CD8-positive, alpha-beta memory T cell (primary cell): ENCODE measurements at regions of chr17 and their contacts with region 1.

Region 1: GRCh38 chr17:67475236-67475937 is 98.3 kb downstream of the PITPNC1 start:
- DNase-seq: peak; percentile 73 to 89 (median 81)
- H3K4me3 ChIP-seq: peak overlapping the region; percentile 53
- H3K4me3 Mint-ChIP-seq: peak overlapping the region; percentile 42 to 87 (median 78)
- H3K27ac ChIP-seq: peak overlapping the region; percentile 48
- H3K27ac Mint-ChIP-seq: peak overlapping the region; percentile 91 to 99 (median 94)
- H3K4me1 ChIP-seq: peaks cover 71% of the 10 kb centered on the region
- H3K4me1 Mint-ChIP-seq: peaks cover 69 to 82% (median 73%) of the 10 kb centered on the region in 3 donors
- H3K27me3 ChIP-seq: no peaks in the 10 kb centered on the region
- H3K27me3 Mint-ChIP-seq: no peaks in the 10 kb centered on the region

Region 2: DNA sequence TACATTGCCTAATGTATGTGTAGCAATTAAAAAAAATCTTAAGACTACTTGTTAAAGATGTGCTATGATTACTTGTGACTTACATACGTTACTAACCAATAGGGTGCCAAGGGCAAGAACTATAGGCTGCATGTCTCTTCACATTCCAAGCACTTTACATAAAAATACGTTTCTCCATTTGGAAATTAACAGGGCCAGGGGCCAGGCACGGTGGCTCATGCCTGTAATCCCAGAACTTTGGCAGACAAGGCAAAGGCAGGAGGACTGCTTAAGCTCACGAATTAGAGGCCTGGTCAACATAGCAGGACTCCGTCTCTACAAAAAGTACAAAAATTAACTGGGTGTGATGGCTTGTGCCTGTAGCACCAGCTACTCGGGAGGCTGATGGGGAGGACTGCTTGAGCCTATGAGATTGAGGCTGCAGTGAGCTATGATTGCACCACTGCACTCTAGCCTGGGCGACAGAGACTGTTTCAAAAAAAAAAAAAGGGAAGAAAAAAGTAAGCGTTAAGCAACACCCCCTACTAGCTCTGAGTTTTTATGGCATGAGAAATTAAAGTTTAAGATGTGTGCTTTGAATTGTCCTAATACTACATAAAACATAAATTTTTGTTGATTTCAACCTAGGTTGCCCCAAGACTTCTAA is 121.3 kb before region 1 on chr17:
- CTCF ChIA-PET with region 1: no interaction called
- POLR2A ChIA-PET with region 1: no interaction called
- DNase-seq: no peak
- H3K4me3 ChIP-seq: no peak overlapping the region
- H3K4me3 Mint-ChIP-seq: no peak overlapping the region
- H3K27ac ChIP-seq: no peak overlapping the region
- H3K27ac Mint-ChIP-seq: peak overlapping the region in 3 of 8 donors; percentile 56 to 68 (median 66)
- H3K4me1 ChIP-seq: peaks cover 6% of the 10 kb centered on the region
- H3K4me1 Mint-ChIP-seq: peaks cover 22 to 42% (median 26%) of the 10 kb centered on the region in 3 donors
- H3K27me3 ChIP-seq: no peaks in the 10 kb centered on the region
- H3K27me3 Mint-ChIP-seq: no peaks in the 10 kb centered on the region

Region 3: DNA sequence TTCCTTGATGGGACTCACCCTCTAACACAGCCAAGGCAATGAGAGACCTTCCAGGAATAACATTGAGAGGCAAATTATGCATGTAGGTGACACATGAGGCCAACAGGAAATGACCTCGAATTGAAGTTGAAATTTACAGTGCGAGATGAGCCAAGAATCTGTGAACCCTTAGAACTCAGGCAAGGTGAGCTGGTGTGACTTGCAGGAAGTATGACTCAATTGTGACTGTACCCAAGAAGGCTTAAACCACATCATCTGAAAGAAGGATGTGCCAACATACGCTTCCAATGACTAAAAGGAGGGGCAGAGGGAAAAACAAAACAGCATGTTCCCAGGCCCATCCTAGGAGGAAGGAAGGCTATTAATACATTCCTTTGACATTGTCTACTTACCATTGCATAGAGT is 53.5 kb before region 1 on chr17:
- CTCF ChIA-PET with region 1: interaction called, 20 read pairs
- POLR2A ChIA-PET with region 1: interaction called, 4 read pairs
- DNase-seq: peak; percentile 16 to 82 (median 79)
- H3K4me3 ChIP-seq: no peak overlapping the region
- H3K4me3 Mint-ChIP-seq: peak overlapping the region; percentile 1 to 82 (median 67)
- H3K27ac ChIP-seq: peak overlapping the region; percentile 49
- H3K27ac Mint-ChIP-seq: peak overlapping the region; percentile 89 to 99 (median 96)
- H3K4me1 ChIP-seq: peaks cover 73% of the 10 kb centered on the region
- H3K4me1 Mint-ChIP-seq: peaks cover 72 to 97% (median 83%) of the 10 kb centered on the region in 3 donors
- H3K27me3 ChIP-seq: no peaks in the 10 kb centered on the region
- H3K27me3 Mint-ChIP-seq: no peaks in the 10 kb centered on the region

Region 4: DNA sequence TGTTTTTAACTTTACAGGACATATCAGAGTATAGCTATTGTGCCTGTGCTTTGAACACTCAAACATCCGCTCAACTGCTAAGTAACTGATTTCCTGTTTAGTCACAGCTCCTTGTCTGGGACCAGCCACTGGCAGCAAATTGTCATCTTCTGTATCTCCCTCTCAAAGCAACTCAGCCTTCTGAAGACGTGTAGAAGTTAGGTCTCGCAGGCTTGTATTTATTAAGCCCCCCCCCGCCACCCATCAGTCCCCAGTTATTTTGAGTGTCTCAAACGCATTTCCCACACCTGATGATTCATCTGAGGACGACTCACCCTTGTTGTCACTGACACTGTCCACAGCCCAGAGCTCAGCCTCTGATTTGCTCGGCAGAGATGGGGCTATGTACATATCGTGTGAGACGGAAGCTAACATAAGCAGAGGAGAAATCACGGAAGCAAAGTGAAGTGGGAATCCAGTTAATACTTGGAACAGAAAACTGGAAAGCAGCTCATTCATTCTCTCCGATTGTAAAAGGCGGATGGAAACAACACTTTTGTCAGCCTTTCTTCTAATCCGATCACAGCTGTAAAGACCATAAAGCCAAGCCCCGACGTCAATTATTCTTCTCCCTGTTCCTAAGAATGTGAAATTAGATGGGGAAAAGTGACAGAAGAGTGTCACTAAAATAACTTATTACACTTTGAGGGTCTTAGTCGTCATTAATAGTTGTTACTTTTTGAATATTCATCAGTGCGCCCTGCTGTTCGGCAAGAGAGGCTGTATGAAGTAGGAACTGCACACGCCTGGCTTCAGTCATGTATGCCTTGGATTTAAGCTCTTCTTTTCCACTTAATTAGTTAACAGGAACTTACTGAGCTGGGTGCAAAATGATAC is 34.1 kb before region 1 on chr17:
- CTCF ChIA-PET with region 1: interaction called, 49 read pairs
- POLR2A ChIA-PET with region 1: interaction called, 38 read pairs
- DNase-seq: peak; percentile 64 to 92 (median 85)
- H3K4me3 ChIP-seq: peak overlapping the region; percentile 67
- H3K4me3 Mint-ChIP-seq: peak overlapping the region; percentile 73 to 87 (median 80)
- H3K27ac ChIP-seq: peak overlapping the region; percentile 86
- H3K27ac Mint-ChIP-seq: peak overlapping the region; percentile 91 to 100 (median 96)
- H3K4me1 ChIP-seq: peaks cover 92% of the 10 kb centered on the region
- H3K4me1 Mint-ChIP-seq: peaks cover 73 to 94% (median 86%) of the 10 kb centered on the region in 3 donors
- H3K27me3 ChIP-seq: no peaks in the 10 kb centered on the region
- H3K27me3 Mint-ChIP-seq: no peaks in the 10 kb centered on the region

Region 5: GRCh38 chr17:67461228-67461780 is 14.1 kb before region 1 on chr17:
- CTCF ChIA-PET with region 1: interaction called, 21 read pairs
- POLR2A ChIA-PET with region 1: interaction called, 5 read pairs
- DNase-seq: no peak
- H3K4me3 ChIP-seq: no peak overlapping the region
- H3K4me3 Mint-ChIP-seq: peak overlapping the region in 6 of 7 donors; percentile 38 to 81 (median 78)
- H3K27ac ChIP-seq: no peak overlapping the region
- H3K27ac Mint-ChIP-seq: peak overlapping the region; percentile 80 to 96 (median 93)
- H3K4me1 ChIP-seq: peaks cover 59% of the 10 kb centered on the region
- H3K4me1 Mint-ChIP-seq: peaks cover 69 to 92% (median 78%) of the 10 kb centered on the region in 3 donors
- H3K27me3 ChIP-seq: no peaks in the 10 kb centered on the region
- H3K27me3 Mint-ChIP-seq: no peaks in the 10 kb centered on the region